Activated CD4-positive, alpha-beta T cell treated with anti-CD3 and anti-CD28 coated beads, Interleukin-2, amount 10 ng/mL, durations not matched to agents 24 days and 14 days (primary cell): ENCODE measurements at regions of chr3 and their contacts with region 1.

Region 1: DNA sequence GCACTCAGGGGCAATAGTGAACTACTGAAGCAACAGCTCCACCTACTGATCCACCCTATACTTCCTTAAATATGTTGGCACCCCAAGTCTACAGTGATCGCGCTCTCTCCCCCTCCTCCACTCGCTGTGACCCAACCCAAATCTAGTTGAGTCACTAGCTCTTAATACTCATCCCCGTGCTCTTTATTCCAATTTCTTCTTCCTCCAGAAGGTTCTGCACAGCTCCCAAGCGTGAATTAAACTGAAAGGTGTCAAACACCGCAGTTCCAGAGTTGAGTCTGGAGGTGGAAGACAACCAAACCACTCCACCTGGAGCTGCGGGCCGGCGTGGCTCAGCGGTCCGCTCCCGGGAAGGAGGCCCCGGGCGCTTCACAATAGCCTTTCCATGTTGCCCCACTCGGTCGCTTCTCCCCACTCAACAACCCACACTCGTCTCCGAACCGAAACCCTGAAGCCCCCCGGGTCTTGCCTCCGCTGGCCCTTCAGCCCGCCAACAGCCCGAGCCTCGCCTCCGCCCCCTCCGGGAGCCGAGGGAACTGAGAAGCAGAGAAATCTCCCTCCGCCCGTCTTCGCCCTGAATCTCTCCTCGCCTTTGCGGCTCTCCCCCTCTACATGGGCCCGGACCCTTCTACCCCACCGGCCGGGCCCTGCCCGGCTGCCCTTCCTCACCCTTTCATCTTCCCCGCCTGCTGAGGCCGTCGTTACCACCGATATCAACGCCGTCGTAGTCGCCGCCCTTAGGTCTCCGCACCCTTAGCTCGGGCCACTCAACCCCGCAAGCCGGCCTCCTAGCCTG is 578 bp downstream of the NAA50 start:
- DNase-seq: peak; percentile 93
- H3K4me3 Mint-ChIP-seq: peak overlapping the region; percentile 89
- H3K27ac Mint-ChIP-seq: peak overlapping the region; percentile 99
- H3K4me1 Mint-ChIP-seq: peaks cover 62% of the 10 kb centered on the region
- H3K27me3 Mint-ChIP-seq: no peaks in the 10 kb centered on the region

Region 2: GRCh38 chr3:113019182-113020137 is 726.0 kb before region 1 on chr3:
- intact Hi-C with region 1: loop called (anchors 5 kb)
- DNase-seq: peak; percentile 94
- H3K4me3 Mint-ChIP-seq: peak overlapping the region; percentile 89
- H3K27ac Mint-ChIP-seq: peak overlapping the region; percentile 97
- H3K4me1 Mint-ChIP-seq: peaks cover 40% of the 10 kb centered on the region
- H3K27me3 Mint-ChIP-seq: no peaks in the 10 kb centered on the region

Region 3: DNA sequence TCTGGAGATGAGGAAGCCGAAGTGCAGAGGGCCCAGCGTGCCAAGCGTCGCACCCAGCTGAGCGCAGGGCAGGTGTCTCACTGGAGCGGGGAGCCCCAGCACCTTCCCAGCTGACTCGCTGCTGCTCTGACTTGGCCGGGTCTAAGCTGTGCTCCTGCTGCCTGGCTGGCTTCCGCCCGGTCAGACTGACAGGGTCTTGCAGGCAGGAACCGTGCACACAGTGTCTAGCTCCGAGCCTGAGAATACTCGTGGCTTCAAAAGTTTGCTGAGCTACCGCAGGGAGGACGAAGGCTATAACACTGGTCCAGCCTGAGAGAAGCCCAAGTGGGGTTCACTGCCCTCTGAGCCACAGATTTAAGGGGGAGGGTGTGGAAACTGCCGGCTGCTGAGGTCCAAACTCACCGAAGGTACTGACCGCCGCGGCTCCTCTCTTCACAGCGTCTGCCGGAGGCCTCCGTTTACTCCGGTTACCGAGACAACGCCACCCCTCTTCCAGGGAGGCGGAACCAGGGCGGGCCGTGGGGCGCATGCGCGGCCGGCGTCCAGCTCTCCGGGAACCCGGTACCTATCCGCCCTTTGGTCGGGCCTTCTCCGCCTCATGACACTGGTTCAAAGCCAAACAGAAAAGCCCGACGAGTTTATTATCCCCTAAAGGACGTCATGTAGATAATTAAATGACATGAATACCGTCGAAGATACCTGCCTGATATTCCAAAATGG is 304.3 kb before region 1 on chr3 and contains the start of gene CFAP44:
- intact Hi-C with region 1: no loop called
- DNase-seq: peak; percentile 86
- H3K4me3 Mint-ChIP-seq: peak within 1 kb of the TSS; percentile 30
- H3K27ac Mint-ChIP-seq: no peak within 1 kb of the TSS
- H3K4me1 Mint-ChIP-seq: no peaks in the 10 kb centered on the region
- H3K27me3 Mint-ChIP-seq: no peaks in the 10 kb centered on the region
- total RNA-seq, gene CFAP44: 2.5 and 2.7 TPM in 2 replicates

Region 4: GRCh38 chr3:113606539-113607218 is 138.8 kb before region 1 on chr3:
- intact Hi-C with region 1: loop called (anchors 1 kb)
- DNase-seq: peak; percentile 85
- H3K4me3 Mint-ChIP-seq: peak overlapping the region; percentile 55
- H3K27ac Mint-ChIP-seq: peak overlapping the region; percentile 27
- H3K4me1 Mint-ChIP-seq: peaks cover 18% of the 10 kb centered on the region
- H3K27me3 Mint-ChIP-seq: no peaks in the 10 kb centered on the region

Region 5: DNA sequence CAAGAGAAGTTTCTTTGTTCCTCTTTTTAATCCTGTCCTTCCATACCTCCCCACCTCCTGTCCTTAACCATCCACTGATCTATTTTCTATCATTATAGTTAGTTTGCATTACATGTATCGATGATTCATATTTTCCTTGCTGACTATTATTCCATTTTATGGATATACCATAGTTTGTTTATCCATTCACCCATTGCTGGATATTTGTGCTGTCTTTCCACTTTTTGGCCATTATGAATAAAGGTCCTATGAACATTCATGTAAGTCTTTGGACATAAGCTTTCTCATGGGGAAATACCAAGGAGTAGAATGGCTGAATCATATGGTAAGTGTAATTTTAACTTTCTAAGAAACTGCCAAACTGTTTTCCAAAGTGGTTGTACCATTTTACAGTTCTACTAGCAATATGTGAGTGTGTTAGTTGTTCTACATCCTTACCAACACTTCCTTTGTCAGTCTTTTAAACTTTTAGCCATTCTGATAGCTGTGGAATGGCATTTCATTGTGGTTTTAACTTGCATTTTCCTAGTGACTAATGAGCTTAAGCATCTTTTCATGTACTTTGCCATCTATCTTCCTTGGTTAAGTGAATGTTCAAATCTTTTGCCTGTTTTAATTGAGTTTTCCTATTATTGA is 13.0 kb after region 1 on chr3:
- intact Hi-C with region 1: no loop called
- DNase-seq: no peak
- H3K4me3 Mint-ChIP-seq: no peak overlapping the region
- H3K27ac Mint-ChIP-seq: no peak overlapping the region
- H3K4me1 Mint-ChIP-seq: peaks cover 3% of the 10 kb centered on the region
- H3K27me3 Mint-ChIP-seq: no peaks in the 10 kb centered on the region

Region 6: DNA sequence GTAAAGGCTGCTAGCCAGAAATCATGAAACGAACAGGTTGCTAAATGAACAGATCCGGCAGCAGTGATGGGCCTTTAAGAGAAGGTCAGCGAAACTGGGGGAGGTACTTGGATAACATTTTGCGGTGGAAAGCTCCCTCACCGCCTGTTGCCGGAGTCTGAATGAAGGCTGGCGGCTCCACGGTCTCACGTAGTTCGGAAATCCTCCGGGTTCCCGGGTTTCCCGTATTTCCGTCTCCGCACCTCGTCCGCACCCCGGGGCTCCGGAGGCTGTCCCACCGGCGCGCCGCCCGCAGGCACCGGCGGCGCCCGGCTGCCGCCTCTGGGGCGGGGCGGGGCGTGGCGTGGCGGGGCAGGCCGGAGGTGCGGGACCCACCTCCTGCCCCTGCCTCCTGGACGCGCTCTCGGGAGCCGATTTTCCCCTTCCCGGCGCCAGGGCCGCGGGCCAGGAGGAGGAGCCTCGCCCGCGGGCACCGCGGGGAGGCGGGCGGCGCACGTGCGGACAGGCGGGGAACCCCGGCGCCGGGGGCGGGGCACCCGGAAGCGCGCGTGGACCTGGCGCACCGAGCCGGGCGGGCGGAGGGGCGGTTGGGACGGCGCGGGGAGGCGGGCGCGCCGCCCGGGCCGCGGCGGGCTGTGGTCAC is 202.0 kb after region 1 on chr3 and contains the start of gene ZDHHC23:
- intact Hi-C with region 1: loop called (anchors 5 kb)
- DNase-seq: peak; percentile 93
- H3K4me3 Mint-ChIP-seq: peak within 1 kb of the TSS; percentile 82
- H3K27ac Mint-ChIP-seq: peak within 1 kb of the TSS; percentile 57
- H3K4me1 Mint-ChIP-seq: peaks cover 10% of the 10 kb centered on the region
- H3K27me3 Mint-ChIP-seq: peaks cover 61% of the 10 kb centered on the region
- total RNA-seq, gene ZDHHC23: 1.9 and 2.4 TPM in 2 replicates

Region 7: GRCh38 chr3:113981803-113982202 is 236.3 kb after region 1 on chr3:
- intact Hi-C with region 1: no loop called
- DNase-seq: no peak
- H3K4me3 Mint-ChIP-seq: no peak overlapping the region
- H3K27ac Mint-ChIP-seq: no peak overlapping the region
- H3K4me1 Mint-ChIP-seq: peaks cover 1% of the 10 kb centered on the region
- H3K27me3 Mint-ChIP-seq: no peaks in the 10 kb centered on the region

Region 8: GRCh38 chr3:114319453-114319852 is 574.0 kb after region 1 on chr3:
- intact Hi-C with region 1: loop called (anchors 10 kb)
- DNase-seq: no peak
- H3K4me3 Mint-ChIP-seq: no peak overlapping the region
- H3K27ac Mint-ChIP-seq: no peak overlapping the region
- H3K4me1 Mint-ChIP-seq: peaks cover 44% of the 10 kb centered on the region
- H3K27me3 Mint-ChIP-seq: no peaks in the 10 kb centered on the region